Right ventricle myocardium inferior (tissue), 1 donor: ENCODE measurements at regions of chr13 and their contacts with region 1.

Region 1: GRCh38 chr13:97018029-97018831 is 24.0 kb upstream of the OXGR1 start:
- DNase-seq: no peak
- ATAC-seq: no peak

Region 2: GRCh38 chr13:97659602-97660001 is 641.4 kb after region 1 on chr13:
- intact Hi-C with region 1: loop called (anchors 10 kb)
- DNase-seq: no peak
- ATAC-seq: peak; percentile 42